ENCODE measurements at regions of chr11 and their contacts with region 1.

Region 1: DNA sequence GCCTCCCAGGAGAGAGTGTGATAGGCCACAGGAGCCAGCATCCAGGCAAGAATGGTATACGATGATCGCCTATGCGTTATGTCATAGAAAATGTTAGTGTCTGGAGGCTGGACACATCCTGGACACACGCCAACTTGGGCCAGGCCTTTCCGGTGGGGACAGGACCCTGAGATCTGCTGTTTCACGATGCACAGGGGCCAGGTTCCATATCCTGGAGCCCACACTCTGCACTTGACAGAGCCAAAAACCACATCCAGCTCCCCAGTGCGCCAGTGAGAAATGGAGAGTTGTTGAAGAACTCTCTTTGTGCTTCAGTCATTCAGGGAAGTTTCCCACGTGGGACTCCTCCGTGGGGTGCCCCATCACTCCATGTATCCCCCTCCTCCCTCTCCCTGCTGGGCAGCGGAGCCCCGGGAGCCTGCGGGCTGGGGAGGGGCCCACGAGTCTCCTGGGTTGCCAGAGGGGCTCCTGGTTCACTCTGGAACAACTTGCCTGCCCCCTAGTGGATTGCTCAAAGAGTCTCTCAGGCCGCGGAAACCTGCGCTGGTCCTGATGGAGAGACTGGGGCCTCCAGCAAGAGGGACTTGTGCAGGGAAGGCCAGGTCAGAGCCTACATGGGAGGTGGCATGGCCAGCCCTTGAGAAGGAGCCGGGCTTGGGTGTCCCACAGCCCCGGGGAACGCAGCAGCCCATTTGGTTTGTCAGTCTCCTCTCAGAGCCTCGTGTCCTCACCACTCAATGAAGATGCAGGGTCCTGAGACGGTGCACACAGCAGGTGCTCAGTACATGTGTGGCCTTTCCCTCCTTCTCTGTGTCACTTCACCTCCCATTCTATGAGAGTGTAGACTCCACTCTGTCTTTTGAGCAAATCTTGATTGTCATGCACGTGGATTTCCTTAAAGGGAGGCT is 10.2 kb upstream of the LRRC32 start:
- DNase-seq: peak; percentile 82
- ATAC-seq: peak; percentile 86
- H3K4me3 Mint-ChIP-seq: no peak overlapping the region
- H3K27ac Mint-ChIP-seq: no peak overlapping the region
- H3K4me1 Mint-ChIP-seq: no peaks in the 10 kb centered on the region
- H3K27me3 Mint-ChIP-seq: peaks cover 7% of the 10 kb centered on the region

Region 2: DNA sequence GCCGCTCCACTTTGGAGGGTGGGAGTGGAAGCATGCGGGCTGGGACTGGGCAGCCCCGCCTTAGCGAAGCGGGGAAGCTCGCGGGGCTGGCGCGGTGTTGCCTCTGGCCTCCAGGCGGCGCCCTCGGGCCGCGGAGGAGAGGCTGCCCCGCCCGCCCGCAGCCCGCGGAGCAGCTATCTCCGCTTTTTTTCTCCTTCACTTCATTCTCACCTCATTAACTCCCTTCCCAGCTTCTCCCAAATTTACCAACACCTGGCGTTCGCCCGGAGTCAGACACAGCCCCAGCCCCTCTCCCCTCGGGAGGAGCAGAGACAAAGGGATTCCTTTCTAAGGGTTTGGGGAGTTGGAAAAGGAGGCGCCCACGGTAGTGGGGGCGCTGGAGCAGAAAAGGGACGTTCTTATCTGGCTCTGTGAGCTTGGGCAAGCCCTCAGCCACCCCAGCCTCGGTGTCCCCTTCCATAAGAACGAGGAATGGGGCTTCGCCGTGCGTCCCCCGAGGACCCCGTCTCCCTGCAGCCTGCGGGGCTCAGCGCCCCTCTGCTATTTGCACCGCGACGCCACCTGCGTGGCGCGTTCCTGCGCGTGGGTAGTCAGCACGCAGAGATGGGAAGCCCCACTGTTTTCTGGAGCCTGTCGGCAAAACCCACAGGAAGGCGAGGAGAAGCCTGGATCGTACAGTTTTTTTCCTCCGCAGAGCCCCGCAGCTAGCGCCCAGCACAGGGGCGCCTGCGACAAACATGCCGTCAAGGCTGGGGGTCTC is 472.9 kb before region 1 on chr11:
- CTCF ChIA-PET with region 1: interaction called, 8 read pairs
- POLR2A ChIA-PET with region 1: no interaction called
- intact Hi-C with region 1: loop called (anchors 1 to 5 kb)
- DNase-seq: peak; percentile 87
- ATAC-seq: peak; percentile 76
- H3K4me3 Mint-ChIP-seq: peak overlapping the region; percentile 60
- H3K27ac Mint-ChIP-seq: no peak overlapping the region
- H3K4me1 Mint-ChIP-seq: peaks cover 15% of the 10 kb centered on the region
- H3K27me3 Mint-ChIP-seq: peaks cover 55% of the 10 kb centered on the region

Region 3: GRCh38 chr11:76329084-76329984 is 351.4 kb before region 1 on chr11:
- CTCF ChIA-PET with region 1: no interaction called
- POLR2A ChIA-PET with region 1: no interaction called
- intact Hi-C with region 1: loop called (anchors 10 kb)
- DNase-seq: no peak
- ATAC-seq: no peak
- H3K4me3 Mint-ChIP-seq: no peak overlapping the region
- H3K27ac Mint-ChIP-seq: no peak overlapping the region
- H3K4me1 Mint-ChIP-seq: no peaks in the 10 kb centered on the region
- H3K27me3 Mint-ChIP-seq: peaks cover 2% of the 10 kb centered on the region

Region 4: DNA sequence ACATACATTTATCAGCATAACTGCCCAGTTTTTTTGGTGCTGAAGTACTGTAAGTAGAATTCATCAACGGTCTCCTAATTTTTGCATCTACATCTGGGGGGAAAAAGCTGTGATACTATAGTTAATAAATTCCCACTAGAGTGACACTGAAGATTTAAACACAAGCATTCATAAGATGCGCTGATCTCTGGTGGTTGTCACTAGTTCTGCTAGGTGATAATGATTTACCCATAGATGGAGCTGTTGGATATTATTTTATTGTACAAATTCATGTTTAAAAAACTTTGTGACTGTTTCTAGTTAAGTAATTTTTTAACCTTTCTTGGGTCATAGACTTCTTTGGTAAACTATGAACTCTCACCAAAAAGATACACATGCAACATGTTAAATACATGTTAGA is 129.4 kb before region 1 on chr11:
- CTCF ChIA-PET with region 1: interaction called, 3 read pairs
- POLR2A ChIA-PET with region 1: no interaction called
- intact Hi-C with region 1: loop called in 1 of 2 experiments (anchors 1 kb)
- DNase-seq: no peak
- ATAC-seq: no peak
- H3K4me3 Mint-ChIP-seq: no peak overlapping the region
- H3K27ac Mint-ChIP-seq: no peak overlapping the region
- H3K4me1 Mint-ChIP-seq: peaks cover 6% of the 10 kb centered on the region
- H3K27me3 Mint-ChIP-seq: no peaks in the 10 kb centered on the region

Region 5: DNA sequence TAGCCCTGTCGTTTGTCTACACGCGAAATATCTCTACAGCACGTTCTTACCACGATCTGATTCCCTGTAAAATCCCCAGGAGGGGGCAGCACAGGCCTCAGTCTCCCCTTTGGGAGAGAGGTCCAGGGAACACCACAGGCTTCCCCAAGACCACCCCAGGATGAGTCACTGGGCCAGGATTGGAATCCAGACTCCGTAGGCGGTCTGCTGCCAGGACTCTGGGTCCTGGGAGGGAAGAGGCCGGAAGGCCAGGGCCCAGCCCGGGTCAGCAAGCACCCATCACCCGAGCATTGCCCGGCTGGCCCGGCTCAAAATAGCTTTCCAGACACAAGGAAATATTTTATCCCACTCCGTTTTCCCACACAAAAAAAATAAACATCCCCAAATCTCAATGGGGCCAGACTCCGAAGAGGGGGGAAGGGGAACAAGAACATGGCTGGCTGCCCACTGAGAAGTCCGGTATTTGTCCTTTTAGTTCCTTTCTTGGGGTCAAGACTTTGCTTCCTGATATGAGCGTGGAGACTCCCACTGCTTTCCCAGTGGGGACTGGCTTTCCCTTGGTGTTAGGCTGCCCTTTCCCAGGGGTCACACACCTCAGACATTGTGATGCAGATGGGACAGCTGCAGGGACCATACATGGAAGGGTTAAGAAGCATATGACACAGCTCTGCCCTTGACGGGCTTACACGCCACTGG is 101.6 kb before region 1 on chr11:
- CTCF ChIA-PET with region 1: interaction called, 3 read pairs
- POLR2A ChIA-PET with region 1: interaction called, 3 read pairs
- intact Hi-C with region 1: loop called in 1 of 2 experiments (anchors 1 kb)
- DNase-seq: peak; percentile 35
- ATAC-seq: no peak
- H3K4me3 Mint-ChIP-seq: no peak overlapping the region
- H3K27ac Mint-ChIP-seq: no peak overlapping the region
- H3K4me1 Mint-ChIP-seq: no peaks in the 10 kb centered on the region
- H3K27me3 Mint-ChIP-seq: peaks cover 3% of the 10 kb centered on the region

Region 6: GRCh38 chr11:76598426-76598839 is 82.3 kb before region 1 on chr11:
- CTCF ChIA-PET with region 1: interaction called, 4 read pairs
- POLR2A ChIA-PET with region 1: no interaction called
- intact Hi-C with region 1: loop called (anchors 1 to 10 kb)
- DNase-seq: peak; percentile 47
- ATAC-seq: peak; percentile 75
- H3K4me3 Mint-ChIP-seq: no peak overlapping the region
- H3K27ac Mint-ChIP-seq: no peak overlapping the region
- H3K4me1 Mint-ChIP-seq: peaks cover 1% of the 10 kb centered on the region
- H3K27me3 Mint-ChIP-seq: peaks cover 4% of the 10 kb centered on the region

Measured in activated CD4-positive, alpha-beta T cell treated with anti-CD3 and anti-CD28 coated beads for 36 hours (primary cell).